ENCODE measurements at regions of chr19 and their contacts with region 1.

Region 1: GRCh38 chr19:4400135-4400936 is at the start of gene SH3GL1:
- DNase-seq: peak; percentile 88 to 96 (median 93)
- H3K4me3 ChIP-seq: peak within 1 kb of the TSS; percentile 99
- H3K27ac ChIP-seq: peak within 1 kb of the TSS; percentile 68 to 88
- H3K4me1 ChIP-seq: peaks cover 14% of the 10 kb centered on the region
- H3K27me3 ChIP-seq: no peaks in the 10 kb centered on the region
- CTCF ChIP-seq: peak; percentile 98 to 100 (median 98)
- EP300 ChIP-seq: no peak
- POLR2A ChIP-seq: peak; percentile 69
- total RNA-seq, gene SH3GL1: 20.5 to 88.6 (median 68.3) TPM

Region 2: GRCh38 chr19:4342615-4343369 is 57.5 kb before region 1 on chr19:
- intact Hi-C with region 1: loop called in 1 of 4 experiments (anchors 5 kb)
- DNase-seq: peak; percentile 93 to 97 (median 95)
- H3K4me3 ChIP-seq: peak overlapping the region; percentile 72
- H3K27ac ChIP-seq: peak overlapping the region; percentile 83 to 86
- H3K4me1 ChIP-seq: peaks cover 9% of the 10 kb centered on the region
- H3K27me3 ChIP-seq: no peaks in the 10 kb centered on the region
- CTCF ChIP-seq: no peak
- EP300 ChIP-seq: no peak
- POLR2A ChIP-seq: peak; percentile 96

Region 3: GRCh38 chr19:4359627-4360000 is 40.7 kb before region 1 on chr19:
- intact Hi-C with region 1: loop called in 1 of 4 experiments (anchors 5 kb)
- DNase-seq: peak in 2 of 5 donors; percentile 46 to 47
- H3K4me3 ChIP-seq: no peak overlapping the region
- H3K27ac ChIP-seq: peak overlapping the region; percentile 70 to 88
- H3K4me1 ChIP-seq: peaks cover 25% of the 10 kb centered on the region
- H3K27me3 ChIP-seq: no peaks in the 10 kb centered on the region
- CTCF ChIP-seq: no peak
- EP300 ChIP-seq: no peak
- POLR2A ChIP-seq: no peak

Region 4: GRCh38 chr19:6362027-6362350 is 1961.7 kb after region 1 on chr19:
- intact Hi-C with region 1: loop called in 1 of 4 experiments (anchors 5 kb)
- DNase-seq: peak in 3 of 5 donors; percentile 49 to 62 (median 59)
- H3K4me3 ChIP-seq: peak overlapping the region; percentile 65
- H3K27ac ChIP-seq: peak overlapping the region; percentile 73 to 92
- H3K4me1 ChIP-seq: peaks cover 2% of the 10 kb centered on the region
- H3K27me3 ChIP-seq: no peaks in the 10 kb centered on the region
- CTCF ChIP-seq: no peak
- EP300 ChIP-seq: no peak
- POLR2A ChIP-seq: no peak

Measured in ovary (tissue), 10 donors.